ENCODE measurements at regions of chr18 and their contacts with region 1.

Region 1: GRCh38 chr18:75612456-75612855 is 185.0 kb upstream of the SMIM21 start:
- DNase-seq: no peak
- H3K4me3 ChIP-seq: no peak overlapping the region
- H3K27ac ChIP-seq: no peak overlapping the region
- H3K4me1 ChIP-seq: no peaks in the 10 kb centered on the region
- H3K27me3 ChIP-seq: peaks cover 21% of the 10 kb centered on the region
- CTCF ChIP-seq: no peak

Region 2: GRCh38 chr18:75507636-75508035 is 104.8 kb before region 1 on chr18:
- CTCF ChIA-PET with region 1: no interaction called
- POLR2A ChIA-PET with region 1: interaction called, 10 read pairs
- intact Hi-C with region 1: no loop called
- DNase-seq: no peak
- H3K4me3 ChIP-seq: no peak overlapping the region
- H3K27ac ChIP-seq: no peak overlapping the region
- H3K4me1 ChIP-seq: no peaks in the 10 kb centered on the region
- H3K27me3 ChIP-seq: peaks cover 75% of the 10 kb centered on the region
- CTCF ChIP-seq: no peak

Region 3: GRCh38 chr18:75563150-75563549 is 49.3 kb before region 1 on chr18:
- CTCF ChIA-PET with region 1: no interaction called
- POLR2A ChIA-PET with region 1: no interaction called
- intact Hi-C with region 1: no loop called
- DNase-seq: no peak
- H3K4me3 ChIP-seq: no peak overlapping the region
- H3K27ac ChIP-seq: no peak overlapping the region
- H3K4me1 ChIP-seq: no peaks in the 10 kb centered on the region
- H3K27me3 ChIP-seq: peaks cover 86% of the 10 kb centered on the region
- CTCF ChIP-seq: no peak

Region 4: DNA sequence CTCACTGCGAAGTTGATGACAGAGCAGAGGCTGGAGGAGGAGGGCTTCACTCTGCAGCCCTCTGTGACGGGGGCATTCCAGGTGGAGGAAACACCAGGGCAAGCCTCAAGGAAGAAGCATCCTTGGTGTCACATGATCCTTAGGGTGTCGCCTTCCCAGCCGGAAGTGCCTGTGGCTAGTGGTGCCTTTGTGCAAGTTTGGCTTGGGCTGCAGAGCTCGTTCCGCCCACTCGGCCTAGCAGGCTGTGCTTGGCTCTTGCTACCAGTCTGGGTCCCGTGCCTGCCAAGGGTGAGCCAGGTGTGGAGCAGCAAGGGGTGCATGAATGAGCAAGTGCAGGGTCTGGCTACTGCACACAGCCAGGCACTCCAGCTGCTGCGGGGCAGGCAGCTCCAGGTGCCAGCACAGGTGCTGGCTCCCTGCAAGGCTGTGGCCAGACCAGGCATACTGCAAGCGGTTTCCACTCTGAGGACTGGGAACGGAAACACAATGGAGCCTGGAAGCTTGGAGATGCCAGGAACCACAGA is 140.3 kb after region 1 on chr18:
- CTCF ChIA-PET with region 1: no interaction called
- POLR2A ChIA-PET with region 1: no interaction called
- intact Hi-C with region 1: no loop called
- DNase-seq: no peak
- H3K4me3 ChIP-seq: no peak overlapping the region
- H3K27ac ChIP-seq: no peak overlapping the region
- H3K4me1 ChIP-seq: no peaks in the 10 kb centered on the region
- H3K27me3 ChIP-seq: peaks cover 19% of the 10 kb centered on the region; the same call in 1 of the 2 replicates
- CTCF ChIP-seq: no peak

Region 5: DNA sequence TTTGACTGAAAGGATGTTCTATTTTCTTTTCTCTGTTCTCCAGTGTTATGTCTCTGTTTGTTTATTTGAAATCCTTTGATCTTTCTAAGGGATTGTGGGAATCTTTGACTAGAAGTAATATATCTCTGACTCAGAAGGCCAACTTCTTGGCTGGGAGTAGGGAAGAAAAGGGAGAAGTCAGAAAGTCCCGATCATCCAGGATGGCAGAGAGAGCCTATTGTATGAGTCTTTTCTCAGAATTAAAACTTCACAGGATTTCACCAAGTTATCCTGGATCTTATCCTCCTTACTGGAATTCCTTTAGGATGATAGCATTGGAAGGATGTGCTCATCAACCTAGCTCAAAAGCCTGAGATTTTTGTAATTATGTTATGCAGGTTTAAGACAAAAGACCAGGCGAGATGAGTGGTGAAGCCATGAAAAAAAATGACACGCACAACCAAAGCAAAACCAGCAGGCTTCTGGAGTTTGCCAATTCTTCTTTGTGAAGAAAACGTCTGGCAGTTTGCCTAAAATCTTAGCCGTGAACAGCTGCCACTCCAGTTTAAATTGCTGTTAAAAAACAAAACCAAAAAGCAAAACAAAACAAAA is 198.6 kb after region 1 on chr18:
- CTCF ChIA-PET with region 1: no interaction called
- POLR2A ChIA-PET with region 1: no interaction called
- intact Hi-C with region 1: no loop called
- DNase-seq: no peak
- H3K4me3 ChIP-seq: no peak overlapping the region
- H3K27ac ChIP-seq: no peak overlapping the region
- H3K4me1 ChIP-seq: no peaks in the 10 kb centered on the region
- H3K27me3 ChIP-seq: peaks cover 63% of the 10 kb centered on the region
- CTCF ChIP-seq: no peak

Measured in PC-9 (cell line).